Psoas muscle (tissue), 8 donors: ENCODE measurements at regions of chr4 and their contacts with region 1.

Region 1: GRCh38 chr4:81405894-81406401 is 65.8 kb downstream of the RASGEF1B start:
- DNase-seq: no peak
- ATAC-seq: peak; percentile 70 to 98 (median 84)
- H3K4me3 ChIP-seq: peak overlapping the region; percentile 41
- H3K27ac ChIP-seq: no peak overlapping the region
- H3K4me1 ChIP-seq: no peaks in the 10 kb centered on the region
- H3K27me3 ChIP-seq: no peaks in the 10 kb centered on the region
- CTCF ChIP-seq: peak; percentile 72

Region 2: DNA sequence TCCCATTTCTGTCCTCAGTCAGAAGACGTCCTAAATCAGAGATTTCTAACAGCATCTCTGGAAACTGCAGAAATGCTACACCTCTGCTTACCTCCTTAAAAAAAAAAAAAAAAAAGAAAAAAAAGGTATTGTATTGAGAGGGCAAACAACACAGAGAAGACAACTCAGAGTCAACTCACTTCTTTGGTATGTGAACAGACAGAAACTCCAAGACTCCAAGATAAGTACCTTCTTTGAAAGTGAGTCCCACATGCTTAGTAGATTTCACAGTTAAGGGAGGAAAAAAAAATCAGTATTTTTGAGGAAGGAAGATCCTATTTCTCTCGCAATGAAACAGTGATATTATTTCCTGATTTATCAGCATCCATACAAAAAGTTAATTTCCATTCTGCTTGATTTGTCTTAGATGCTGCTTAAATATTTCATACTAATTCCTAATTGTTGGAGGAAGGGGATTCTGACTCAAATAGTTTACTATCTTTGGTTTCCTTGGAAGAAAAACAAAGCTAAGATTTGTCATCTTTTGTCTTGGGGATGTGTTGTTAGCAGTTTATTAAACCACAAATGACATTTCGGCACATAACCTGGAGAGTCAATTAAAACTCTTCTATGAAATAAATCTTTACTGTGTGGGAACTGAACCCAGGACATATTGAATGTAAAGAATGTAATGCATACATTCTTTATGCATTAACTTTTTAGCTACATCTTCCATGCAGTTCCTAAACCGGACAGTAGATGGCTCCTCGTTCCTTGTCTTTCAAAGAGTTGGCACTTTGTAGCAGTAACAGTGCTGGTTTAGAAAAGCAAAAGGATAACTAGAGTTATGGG is 61.1 kb after region 1 on chr4:
- intact Hi-C with region 1: loop called in 1 of 2 experiments (anchors 5 kb)
- DNase-seq: no peak
- ATAC-seq: peak in 1 of 4 donors; percentile 27
- H3K4me3 ChIP-seq: no peak overlapping the region
- H3K27ac ChIP-seq: no peak overlapping the region
- H3K4me1 ChIP-seq: no peaks in the 10 kb centered on the region
- H3K27me3 ChIP-seq: no peaks in the 10 kb centered on the region
- CTCF ChIP-seq: peak; percentile 96

Region 3: DNA sequence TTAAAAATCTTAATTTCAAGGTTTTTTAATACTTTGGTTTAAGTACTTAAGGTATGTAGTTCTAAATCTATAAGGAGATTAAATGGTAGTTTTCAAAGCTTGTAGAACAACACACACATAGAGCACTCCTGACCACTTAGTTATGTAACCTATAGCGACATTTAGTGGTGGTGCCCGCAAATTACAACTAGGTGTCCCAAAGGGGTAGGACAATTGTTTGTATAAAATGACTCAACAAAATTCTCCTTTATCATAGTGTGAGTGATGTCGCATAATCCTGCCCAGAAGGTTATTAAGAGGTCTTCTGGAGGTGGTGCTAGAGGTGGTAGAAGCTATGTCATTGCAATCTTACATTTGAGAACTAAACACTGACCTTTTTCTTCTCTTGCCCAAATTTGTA is 438.8 kb after region 1 on chr4:
- intact Hi-C with region 1: loop called (anchors 1 to 10 kb)
- DNase-seq: peak; percentile 44 to 60
- ATAC-seq: peak; percentile 83 to 98 (median 88)
- H3K4me3 ChIP-seq: no peak overlapping the region
- H3K27ac ChIP-seq: no peak overlapping the region
- H3K4me1 ChIP-seq: no peaks in the 10 kb centered on the region
- H3K27me3 ChIP-seq: no peaks in the 10 kb centered on the region
- CTCF ChIP-seq: peak; percentile 78

Region 4: GRCh38 chr4:82201805-82202641 is 796.1 kb after region 1 on chr4:
- intact Hi-C with region 1: loop called (anchors 5 to 10 kb)
- DNase-seq: no peak
- ATAC-seq: no peak
- H3K4me3 ChIP-seq: no peak overlapping the region
- H3K27ac ChIP-seq: no peak overlapping the region
- H3K4me1 ChIP-seq: no peaks in the 10 kb centered on the region
- H3K27me3 ChIP-seq: no peaks in the 10 kb centered on the region
- CTCF ChIP-seq: peak; percentile 34

Region 5: GRCh38 chr4:82268050-82268825 is 862.3 kb after region 1 on chr4:
- intact Hi-C with region 1: loop called (anchors 5 kb)
- DNase-seq: peak; percentile 42 to 59
- ATAC-seq: peak; percentile 73 to 89 (median 82)
- H3K4me3 ChIP-seq: no peak overlapping the region
- H3K27ac ChIP-seq: no peak overlapping the region
- H3K4me1 ChIP-seq: no peaks in the 10 kb centered on the region
- H3K27me3 ChIP-seq: peaks cover 0 to 1% (median 0%) of the 10 kb centered on the region in 3 donors
- CTCF ChIP-seq: peak; percentile 63

Region 6: DNA sequence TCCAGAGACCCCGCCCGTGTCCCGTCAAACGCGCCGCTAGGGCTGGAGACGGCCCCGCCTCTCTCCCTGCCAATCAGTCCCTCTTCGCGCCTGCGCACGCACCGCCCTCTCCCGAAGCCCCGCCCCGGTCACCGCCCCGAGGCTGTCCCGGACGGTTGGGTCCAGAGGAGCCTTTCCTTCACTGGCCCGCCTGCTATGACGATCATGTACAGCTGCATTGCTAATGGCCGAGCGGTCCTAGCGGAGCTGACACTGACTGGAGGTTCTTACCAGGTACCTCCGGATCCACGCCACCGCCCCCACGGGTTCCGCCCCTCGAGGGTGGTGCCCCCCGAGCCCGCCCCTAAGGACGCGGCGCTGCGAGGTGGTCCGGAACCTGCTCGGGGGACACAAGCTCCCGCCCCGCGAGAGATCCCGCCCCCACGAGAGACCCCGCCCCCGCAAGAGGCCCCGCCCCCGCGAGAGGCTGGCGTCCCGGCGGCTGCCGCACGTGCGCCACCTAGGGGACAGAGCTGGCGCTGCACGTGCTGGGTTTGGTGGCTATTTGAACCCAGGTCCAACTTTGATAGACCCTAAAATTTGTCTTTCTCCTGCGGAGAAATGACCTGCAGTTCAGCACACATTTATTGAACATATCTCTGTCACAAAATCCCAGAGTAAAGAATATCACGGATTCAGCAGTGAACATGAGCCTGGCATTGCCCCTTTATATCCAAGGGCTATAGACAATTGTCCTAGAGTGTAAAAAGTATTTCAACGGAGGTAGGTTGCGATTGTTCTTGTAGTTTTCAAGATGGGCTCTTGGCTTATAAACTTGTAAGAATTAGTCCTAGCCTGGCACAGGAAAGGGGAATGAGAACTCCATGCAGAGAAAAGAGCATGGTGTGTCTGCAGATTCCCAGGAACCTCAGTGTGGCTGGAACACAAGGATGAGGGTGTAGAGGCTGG is 879.2 kb after region 1 on chr4:
- intact Hi-C with region 1: loop called in 1 of 2 experiments (anchors 5 kb)
- DNase-seq: peak; percentile 98 to 100
- ATAC-seq: peak; percentile 99 to 100 (median 99)
- H3K4me3 ChIP-seq: peak overlapping the region; percentile 68
- H3K27ac ChIP-seq: peak overlapping the region; percentile 71
- H3K4me1 ChIP-seq: no peaks in the 10 kb centered on the region
- H3K27me3 ChIP-seq: no peaks in the 10 kb centered on the region
- CTCF ChIP-seq: peak; percentile 89